Panc1 (cell line): ENCODE measurements at regions of chr17 and their contacts with region 1.

Region 1: GRCh38 chr17:51461578-51462004 is 201.2 kb downstream of the UTP18 start:
- DNase-seq: peak; percentile 27
- ATAC-seq: peak; percentile 93
- H3K4me3 ChIP-seq: no peak overlapping the region
- H3K27ac ChIP-seq: no peak overlapping the region
- H3K4me1 ChIP-seq: no peaks in the 10 kb centered on the region
- H3K27me3 ChIP-seq: peaks cover 11% of the 10 kb centered on the region
- CTCF ChIP-seq: peak; percentile 93

Region 2: DNA sequence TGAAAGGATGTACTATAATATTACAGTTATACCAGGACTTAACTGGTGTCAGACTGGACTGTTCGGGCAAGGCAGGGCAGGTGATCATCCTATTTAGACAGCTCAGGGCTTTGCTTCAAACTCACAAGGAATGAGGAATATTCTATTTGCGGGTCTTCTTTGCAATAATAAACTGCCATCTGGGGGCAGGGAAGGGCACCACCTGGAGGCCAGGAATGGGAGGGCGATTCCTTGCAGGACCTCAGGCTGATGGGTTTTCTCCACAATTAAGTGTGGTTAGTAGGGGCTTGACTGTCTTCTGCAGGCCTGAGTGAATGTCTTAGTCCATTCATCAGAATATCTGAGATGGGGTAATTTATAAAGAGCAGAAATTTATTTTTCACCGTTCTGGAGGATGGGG is 272.9 kb after region 1 on chr17:
- CTCF ChIA-PET with region 1: no interaction called
- POLR2A ChIA-PET with region 1: no interaction called
- in situ Hi-C with region 1: no loop called
- intact Hi-C with region 1: loop called (anchors 10 kb)
- DNase-seq: no peak
- ATAC-seq: peak; percentile 45; the same call in 1 of the 2 replicates
- H3K4me3 ChIP-seq: no peak overlapping the region
- H3K27ac ChIP-seq: no peak overlapping the region
- H3K4me1 ChIP-seq: no peaks in the 10 kb centered on the region
- H3K27me3 ChIP-seq: no peaks in the 10 kb centered on the region
- CTCF ChIP-seq: peak; percentile 53